ENCODE measurements at regions of chr5 and their contacts with region 1.

Region 1: GRCh38 chr5:138503487-138504270 is 38.4 kb downstream of the EGR1 start:
- DNase-seq: peak; percentile 17
- ATAC-seq: peak; percentile 82
- H3K4me3 ChIP-seq: no peak overlapping the region
- H3K27ac ChIP-seq: no peak overlapping the region
- H3K4me1 ChIP-seq: no peaks in the 10 kb centered on the region
- H3K27me3 ChIP-seq: no peaks in the 10 kb centered on the region
- CTCF ChIP-seq: peak; percentile 79 to 84 (median 82)
- EP300 ChIP-seq: no peak
- POLR2A ChIP-seq: peak; percentile 38; the same call in 1 of the 2 replicates
- RAD21 ChIP-seq: peak; percentile 82

Region 2: GRCh38 chr5:138491669-138492559 is 11.8 kb before region 1 on chr5:
- CTCF ChIA-PET with region 1: interaction called, 13 read pairs
- POLR2A ChIA-PET with region 1: no interaction called
- RAD21 ChIA-PET with region 1: interaction called, 13 read pairs
- SMC1A ChIA-PET with region 1: interaction called, 8 read pairs
- in situ Hi-C with region 1: no loop called
- intact Hi-C with region 1: no loop called
- DNase-seq: peak; percentile 23
- ATAC-seq: peak; percentile 99
- H3K4me3 ChIP-seq: peak overlapping the region; percentile 60
- H3K27ac ChIP-seq: no peak overlapping the region
- H3K4me1 ChIP-seq: peaks cover 7% of the 10 kb centered on the region; the same call in 1 of the 2 replicates
- H3K27me3 ChIP-seq: peaks cover 3 to 9% of the 10 kb centered on the region in 2 experiments; a peak in 3 of 4 replicates
- CTCF ChIP-seq: no peak
- EP300 ChIP-seq: no peak
- POLR2A ChIP-seq: no peak
- RAD21 ChIP-seq: no peak

Region 3: GRCh38 chr5:138542956-138543729 is 39.5 kb after region 1 on chr5 and contains the start of gene ETF1:
- CTCF ChIA-PET with region 1: interaction called, 15 read pairs
- POLR2A ChIA-PET with region 1: interaction called, 3 read pairs
- RAD21 ChIA-PET with region 1: interaction called, 6 read pairs
- SMC1A ChIA-PET with region 1: interaction called, 7 read pairs
- in situ Hi-C with region 1: no loop called
- intact Hi-C with region 1: no loop called
- DNase-seq: peak; percentile 97
- ATAC-seq: peak; percentile 92
- H3K4me3 ChIP-seq: peak within 1 kb of the TSS; percentile 99
- H3K27ac ChIP-seq: peak within 1 kb of the TSS; percentile 100
- H3K4me1 ChIP-seq: peaks cover 17% of the 10 kb centered on the region
- H3K27me3 ChIP-seq: no peaks in the 10 kb centered on the region
- CTCF ChIP-seq: no peak
- EP300 ChIP-seq: 0 out of 4 replicates have a peak, but pooled peaks have one; percentile 6 to 7
- POLR2A ChIP-seq: peak; percentile 86
- RAD21 ChIP-seq: no peak
- polyA plus RNA-seq, gene ETF1: 29.8 to 44.9 TPM

Region 4: DNA sequence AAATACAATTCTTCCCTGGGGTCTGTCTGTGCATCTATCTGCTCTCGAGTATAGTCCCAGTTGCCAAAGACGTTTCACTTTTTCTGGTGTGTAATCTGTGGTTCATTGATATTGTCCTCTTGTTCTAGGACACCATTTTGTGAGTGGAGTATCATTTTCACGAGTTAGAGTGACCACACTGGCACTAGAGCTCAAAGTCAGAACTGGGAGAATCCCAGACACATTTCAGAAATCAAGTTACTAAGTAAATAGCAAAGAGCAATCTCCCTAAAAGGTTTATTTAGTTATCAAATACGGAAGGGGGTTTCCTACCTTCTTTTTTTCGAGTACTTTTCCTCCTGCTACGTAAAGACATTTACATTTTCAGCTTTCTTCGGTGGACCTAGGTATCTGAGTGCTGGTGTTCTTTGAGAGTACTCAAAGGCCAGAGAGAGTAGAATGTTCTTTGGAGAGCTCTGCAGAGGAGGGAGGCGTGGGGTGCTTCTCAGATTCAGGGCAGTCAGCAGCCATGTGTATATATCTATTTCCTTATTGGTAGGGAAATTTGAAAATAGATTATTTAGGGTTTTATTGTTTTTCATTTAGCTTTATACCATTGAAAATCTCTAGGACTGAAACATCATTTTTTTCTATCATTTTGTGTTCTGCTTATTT is 80.4 kb after region 1 on chr5:
- CTCF ChIA-PET with region 1: no interaction called
- POLR2A ChIA-PET with region 1: no interaction called
- RAD21 ChIA-PET with region 1: no interaction called
- SMC1A ChIA-PET with region 1: no interaction called
- in situ Hi-C with region 1: no loop called
- intact Hi-C with region 1: no loop called
- DNase-seq: no peak
- ATAC-seq: no peak
- H3K4me3 ChIP-seq: no peak overlapping the region
- H3K27ac ChIP-seq: no peak overlapping the region
- H3K4me1 ChIP-seq: no peaks in the 10 kb centered on the region
- H3K27me3 ChIP-seq: no peaks in the 10 kb centered on the region; a peak in 1 of 4 replicates
- CTCF ChIP-seq: no peak
- EP300 ChIP-seq: no peak
- POLR2A ChIP-seq: no peak
- RAD21 ChIP-seq: no peak

Region 5: GRCh38 chr5:138844812-138845513 is 341.3 kb after region 1 on chr5:
- CTCF ChIA-PET with region 1: no interaction called
- POLR2A ChIA-PET with region 1: no interaction called
- RAD21 ChIA-PET with region 1: no interaction called
- SMC1A ChIA-PET with region 1: no interaction called
- in situ Hi-C with region 1: no loop called
- intact Hi-C with region 1: no loop called
- DNase-seq: no peak
- ATAC-seq: no peak
- H3K4me3 ChIP-seq: no peak overlapping the region
- H3K27ac ChIP-seq: no peak overlapping the region
- H3K4me1 ChIP-seq: no peaks in the 10 kb centered on the region; the same call in 1 of the 2 replicates
- H3K27me3 ChIP-seq: no peaks in the 10 kb centered on the region
- CTCF ChIP-seq: no peak
- EP300 ChIP-seq: no peak
- POLR2A ChIP-seq: no peak
- RAD21 ChIP-seq: no peak